SK-N-SH (cell line): ENCODE measurements at regions of chr7 and their contacts with region 1.

Region 1: GRCh38 chr7:38398725-38399321 is 125.4 kb upstream of the TARP start:
- DNase-seq: peak; percentile 67
- H3K4me3 ChIP-seq: no peak overlapping the region
- H3K27ac ChIP-seq: no peak overlapping the region
- H3K4me1 ChIP-seq: no peaks in the 10 kb centered on the region
- H3K27me3 ChIP-seq: no peaks in the 10 kb centered on the region; the same call in 1 of the 2 replicates
- CTCF ChIP-seq: peak; percentile 99
- EP300 ChIP-seq: no peak
- RAD21 ChIP-seq: peak; percentile 81

Region 2: DNA sequence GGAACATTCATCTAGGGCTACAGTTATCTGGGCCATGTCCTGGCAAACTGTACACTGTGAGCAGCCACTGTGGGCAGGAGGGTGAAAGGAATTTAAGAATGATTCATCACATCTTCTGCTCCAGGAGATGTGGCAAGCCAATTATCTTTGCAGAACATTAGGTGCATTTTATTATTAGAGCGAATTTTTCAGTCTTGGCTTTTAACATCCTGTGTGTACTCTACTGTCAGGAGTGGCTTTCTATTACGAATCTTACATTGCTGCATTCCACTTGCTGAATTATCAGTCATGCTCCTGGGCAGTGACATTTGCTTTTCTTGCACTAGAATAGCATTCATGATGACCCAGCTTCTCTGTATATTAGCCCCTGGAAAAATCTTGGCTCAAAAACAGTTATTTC is 16.1 kb before region 1 on chr7:
- CTCF ChIA-PET with region 1: interaction called, 29 read pairs
- POLR2A ChIA-PET with region 1: no interaction called
- DNase-seq: no peak
- H3K4me3 ChIP-seq: no peak overlapping the region
- H3K27ac ChIP-seq: no peak overlapping the region
- H3K4me1 ChIP-seq: no peaks in the 10 kb centered on the region
- H3K27me3 ChIP-seq: no peaks in the 10 kb centered on the region
- CTCF ChIP-seq: no peak
- EP300 ChIP-seq: no peak
- RAD21 ChIP-seq: no peak

Region 3: DNA sequence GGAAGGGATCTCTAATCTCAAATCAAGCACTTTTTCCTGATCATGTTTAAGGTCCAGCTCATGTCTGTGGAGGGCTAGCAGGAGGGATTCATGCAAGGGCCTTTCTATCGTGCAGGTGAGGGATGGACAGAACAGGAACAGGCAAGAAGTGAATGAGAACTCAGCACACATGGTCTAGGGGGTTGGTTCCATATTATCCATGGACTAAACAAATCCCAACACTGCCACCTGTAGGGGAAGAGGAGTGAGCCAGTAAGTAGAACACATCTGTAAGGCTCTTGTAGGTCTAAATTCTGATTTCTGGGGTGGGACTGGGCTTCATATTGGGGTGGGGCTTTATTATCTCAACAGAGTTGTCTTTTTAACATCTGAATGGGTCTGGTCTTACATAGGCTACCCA is 12.6 kb after region 1 on chr7:
- CTCF ChIA-PET with region 1: interaction called, 45 read pairs
- POLR2A ChIA-PET with region 1: no interaction called
- DNase-seq: peak; percentile 28
- H3K4me3 ChIP-seq: no peak overlapping the region
- H3K27ac ChIP-seq: no peak overlapping the region
- H3K4me1 ChIP-seq: no peaks in the 10 kb centered on the region
- H3K27me3 ChIP-seq: no peaks in the 10 kb centered on the region; the same call in 1 of the 2 replicates
- CTCF ChIP-seq: peak; percentile 44
- EP300 ChIP-seq: no peak
- RAD21 ChIP-seq: peak; percentile 29

Region 4: GRCh38 chr7:38438970-38439369 is 40.1 kb after region 1 on chr7:
- CTCF ChIA-PET with region 1: interaction called, 20 read pairs
- POLR2A ChIA-PET with region 1: no interaction called
- DNase-seq: no peak
- H3K4me3 ChIP-seq: no peak overlapping the region
- H3K27ac ChIP-seq: no peak overlapping the region
- H3K4me1 ChIP-seq: no peaks in the 10 kb centered on the region
- H3K27me3 ChIP-seq: no peaks in the 10 kb centered on the region
- CTCF ChIP-seq: no peak
- EP300 ChIP-seq: no peak
- RAD21 ChIP-seq: no peak

Region 5: DNA sequence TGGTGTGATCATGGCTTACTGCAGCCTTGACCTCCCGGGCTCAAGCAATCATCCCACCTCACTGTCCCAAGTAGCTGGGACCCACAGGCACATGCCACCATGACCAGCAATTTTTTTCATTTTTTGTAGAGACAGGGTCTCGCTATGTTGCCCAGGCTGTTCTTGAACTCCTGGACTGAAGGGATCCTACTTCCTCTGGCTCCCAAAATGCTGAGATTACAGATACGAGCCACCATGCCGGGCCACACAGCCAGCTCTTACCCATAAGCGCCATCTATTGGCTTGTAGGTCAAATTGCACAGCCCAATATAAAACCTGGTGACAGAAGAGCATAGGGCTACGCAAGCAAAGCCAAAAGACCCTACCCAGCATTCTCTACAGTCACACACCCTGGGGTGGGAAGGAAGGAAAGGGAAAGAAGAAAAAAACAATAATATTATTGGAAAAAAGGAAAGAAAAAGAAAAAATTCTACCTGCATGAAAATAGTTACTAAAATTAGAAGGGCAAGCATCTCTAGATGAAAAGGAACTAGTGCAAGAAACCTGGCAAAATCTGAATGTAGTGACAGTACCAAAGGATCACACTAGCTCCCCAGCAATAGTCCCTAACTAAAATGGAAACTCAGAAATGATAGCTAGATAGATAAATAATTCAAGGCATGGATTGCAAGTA is 261.7 kb after region 1 on chr7:
- CTCF ChIA-PET with region 1: interaction called, 30 read pairs
- POLR2A ChIA-PET with region 1: no interaction called
- DNase-seq: peak; percentile 61
- H3K4me3 ChIP-seq: peak overlapping the region in 1 of 2 experiments; percentile 10; a peak in 1 of 4 replicates
- H3K27ac ChIP-seq: no peak overlapping the region
- H3K4me1 ChIP-seq: no peaks in the 10 kb centered on the region
- H3K27me3 ChIP-seq: no peaks in the 10 kb centered on the region
- CTCF ChIP-seq: peak; percentile 93
- EP300 ChIP-seq: no peak
- RAD21 ChIP-seq: peak; percentile 77